ENCODE measurements at regions of chr11 and their contacts with region 1.

Region 1: GRCh38 chr11:76666408-76666807 is 4.1 kb downstream of the LRRC32 start:
- DNase-seq: no peak
- H3K4me3 Mint-ChIP-seq: no peak overlapping the region
- H3K27ac Mint-ChIP-seq: no peak overlapping the region
- H3K4me1 Mint-ChIP-seq: peaks cover 14% of the 10 kb centered on the region
- H3K27me3 Mint-ChIP-seq: peaks cover 23% of the 10 kb centered on the region

Region 2: GRCh38 chr11:76598426-76598839 is 68.0 kb before region 1 on chr11:
- CTCF ChIA-PET with region 1: no interaction called
- intact Hi-C with region 1: loop called (anchors 5 kb)
- DNase-seq: peak; percentile 24
- H3K4me3 Mint-ChIP-seq: no peak overlapping the region
- H3K27ac Mint-ChIP-seq: no peak overlapping the region
- H3K4me1 Mint-ChIP-seq: no peaks in the 10 kb centered on the region
- H3K27me3 Mint-ChIP-seq: peaks cover 7% of the 10 kb centered on the region